ENCODE measurements at regions of chr18 and their contacts with region 1.

Region 1: GRCh38 chr18:21997207-21998143 is 171.9 kb upstream of the GATA6 start:
- DNase-seq: peak in 2 of 5 donors; percentile 9 to 21
- H3K4me3 ChIP-seq: no peak overlapping the region
- H3K4me3 Mint-ChIP-seq: no peak overlapping the region
- H3K27ac ChIP-seq: no peak overlapping the region
- H3K27ac Mint-ChIP-seq: no peak overlapping the region
- H3K4me1 ChIP-seq: no peaks in the 10 kb centered on the region
- H3K4me1 Mint-ChIP-seq: peaks cover 4 to 6% (median 5%) of the 10 kb centered on the region in 3 donors
- H3K27me3 ChIP-seq: no peaks in the 10 kb centered on the region
- H3K27me3 Mint-ChIP-seq: peaks cover 6 to 9% of the 10 kb centered on the region in 2 donors

Region 2: GRCh38 chr18:22563098-22563707 is 565.7 kb after region 1 on chr18:
- CTCF ChIA-PET with region 1: interaction called, 22 read pairs
- POLR2A ChIA-PET with region 1: no interaction called
- DNase-seq: peak in 4 of 5 donors; percentile 6 to 45 (median 34)
- H3K4me3 ChIP-seq: no peak overlapping the region
- H3K4me3 Mint-ChIP-seq: no peak overlapping the region
- H3K27ac ChIP-seq: no peak overlapping the region
- H3K27ac Mint-ChIP-seq: no peak overlapping the region
- H3K4me1 ChIP-seq: peaks cover 6% of the 10 kb centered on the region
- H3K4me1 Mint-ChIP-seq: peaks cover 7 to 14% (median 8%) of the 10 kb centered on the region in 3 donors
- H3K27me3 ChIP-seq: peaks cover 29% of the 10 kb centered on the region
- H3K27me3 Mint-ChIP-seq: peaks cover 8 to 75% of the 10 kb centered on the region in 2 donors